ENCODE measurements at regions of chr2 and their contacts with region 1.

Region 1: DNA sequence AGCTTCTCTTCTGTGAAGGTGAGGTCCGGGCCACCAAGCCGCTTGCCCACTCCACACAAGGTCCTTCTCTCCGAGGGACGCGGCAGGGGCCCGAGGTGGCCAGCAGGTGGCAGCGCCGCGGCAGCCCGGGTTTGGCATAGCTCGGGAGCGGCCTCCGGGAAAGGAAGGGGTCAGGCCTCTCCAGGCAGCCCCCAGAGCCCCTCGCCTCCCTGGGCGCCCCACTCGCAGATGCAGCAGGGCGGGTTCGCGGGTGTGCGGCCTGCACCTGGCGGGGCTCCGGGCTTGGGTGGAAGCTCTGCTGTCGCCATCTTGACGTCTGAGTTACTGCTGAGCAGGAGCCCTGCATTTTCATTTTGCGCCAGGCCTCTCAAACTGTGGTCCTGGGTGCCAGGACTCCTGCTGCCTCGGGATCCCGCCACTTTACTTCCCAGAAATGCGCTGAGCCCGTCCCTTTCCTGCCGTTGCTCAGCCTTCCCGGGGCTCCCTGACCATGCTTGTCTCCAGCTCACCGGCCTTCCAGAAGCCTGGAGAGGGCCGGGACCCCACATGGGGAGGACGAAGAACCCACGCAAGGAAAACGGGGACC is 18.6 kb upstream of the NCL start:
- DNase-seq: peak; percentile 75 to 91 (median 82)
- ATAC-seq: peak; percentile 75 to 94 (median 90)
- H3K4me3 ChIP-seq: peak overlapping the region; percentile 24 to 74 (median 64)
- H3K27ac ChIP-seq: peak overlapping the region; percentile 45 to 93 (median 86)
- H3K4me1 ChIP-seq: peaks cover 0 to 14% (median 0%) of the 10 kb centered on the region in 12 donors
- H3K27me3 ChIP-seq: no peaks in the 10 kb centered on the region
- CTCF ChIP-seq: peak; percentile 81 to 98 (median 90)
- POLR2A ChIP-seq: peak in 1 of 2 donors; percentile 33

Region 2: DNA sequence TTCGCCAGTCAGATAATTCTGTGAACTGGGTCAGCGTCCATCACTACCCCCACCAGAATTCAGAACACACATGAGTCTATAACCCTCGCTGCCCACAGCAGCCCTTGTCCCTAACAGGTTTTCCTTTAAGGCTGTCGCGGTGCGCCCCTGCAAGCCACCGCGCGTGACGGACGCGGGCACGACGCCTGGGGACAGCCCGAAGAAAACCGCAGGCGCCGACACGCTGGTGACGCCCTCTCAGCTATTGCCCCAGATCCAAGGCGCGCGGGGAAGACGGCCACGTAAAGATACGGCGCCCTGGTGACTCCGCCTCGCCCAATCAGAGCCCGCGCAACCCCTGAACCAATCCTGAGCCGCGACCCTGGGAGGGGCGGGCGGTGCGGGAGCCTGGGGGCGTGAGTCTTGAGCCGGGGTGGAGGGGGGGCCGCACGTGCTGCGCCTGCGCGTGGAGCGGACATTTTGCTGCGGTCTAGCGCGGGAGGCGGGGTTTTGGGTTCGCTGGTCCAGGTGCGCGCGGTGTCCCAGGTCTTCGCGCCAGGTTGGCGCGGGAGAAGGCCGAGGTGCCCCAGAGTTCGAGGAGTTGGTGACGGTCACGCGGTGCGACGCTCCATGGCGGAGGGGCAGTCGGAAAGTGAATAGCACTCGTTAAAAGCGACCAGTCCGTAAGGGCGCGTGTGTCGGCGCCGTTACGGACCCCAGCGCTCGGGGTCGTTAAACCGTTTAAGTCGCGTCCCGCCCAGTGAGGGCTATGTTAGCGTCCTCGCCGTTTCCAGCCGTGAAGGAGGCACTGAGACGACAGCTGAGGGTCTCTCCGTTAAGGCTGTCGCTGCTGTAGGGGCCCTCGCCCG is 31.4 kb after region 1 on chr2:
- intact Hi-C with region 1: loop called in 1 of 10 experiments (anchors 5 kb)
- DNase-seq: peak; percentile 98 to 99 (median 99)
- ATAC-seq: peak; percentile 99 to 100 (median 100)
- H3K4me3 ChIP-seq: peak overlapping the region; percentile 56 to 89 (median 76)
- H3K27ac ChIP-seq: peak overlapping the region; percentile 48 to 92 (median 86)
- H3K4me1 ChIP-seq: peaks cover 0 to 19% (median 7%) of the 10 kb centered on the region in 12 donors
- H3K27me3 ChIP-seq: no peaks in the 10 kb centered on the region
- CTCF ChIP-seq: no peak
- POLR2A ChIP-seq: peak in 1 of 2 donors; percentile 90

Region 3: GRCh38 chr2:232042911-232043564 is 560.1 kb after region 1 on chr2:
- intact Hi-C with region 1: no loop called
- DNase-seq: no peak
- ATAC-seq: no peak
- H3K4me3 ChIP-seq: no peak overlapping the region
- H3K27ac ChIP-seq: no peak overlapping the region
- H3K4me1 ChIP-seq: peaks cover 0 to 8% (median 0%) of the 10 kb centered on the region in 12 donors
- H3K27me3 ChIP-seq: no peaks in the 10 kb centered on the region
- CTCF ChIP-seq: no peak
- POLR2A ChIP-seq: no peak

Region 4: GRCh38 chr2:232170396-232170795 is 687.5 kb after region 1 on chr2:
- intact Hi-C with region 1: no loop called
- DNase-seq: no peak
- ATAC-seq: no peak
- H3K4me3 ChIP-seq: no peak overlapping the region
- H3K27ac ChIP-seq: peak overlapping the region in 9 of 12 donors; percentile 3 to 61 (median 21)
- H3K4me1 ChIP-seq: peaks cover 0 to 29% (median 7%) of the 10 kb centered on the region in 12 donors
- H3K27me3 ChIP-seq: no peaks in the 10 kb centered on the region
- CTCF ChIP-seq: no peak
- POLR2A ChIP-seq: no peak